ENCODE measurements at regions of chr3 and their contacts with region 1.

Region 1: DNA sequence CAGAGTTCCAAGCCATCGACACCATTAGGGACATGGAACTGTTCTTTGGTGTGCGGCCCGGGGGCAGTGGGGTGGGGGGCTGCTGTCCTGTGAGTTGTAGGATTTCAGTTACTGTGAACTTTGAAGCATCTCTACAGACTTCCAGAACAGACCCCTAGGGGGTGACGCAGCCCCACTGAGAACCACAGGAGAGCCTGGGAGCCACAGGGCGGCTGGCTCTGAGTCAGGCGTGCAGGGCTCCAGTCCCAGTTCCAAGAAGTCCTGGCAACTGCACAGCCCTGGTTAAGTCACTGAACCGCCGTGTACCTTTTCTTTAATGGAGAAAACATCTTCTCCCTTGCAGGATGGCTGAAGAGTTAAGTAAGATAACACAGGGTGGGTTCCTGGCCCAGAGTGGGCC is 23.5 kb upstream of the LRTM1 start:
- DNase-seq: peak in 1 of 2 experiments; percentile 42
- H3K4me3 ChIP-seq: no peak overlapping the region
- H3K27ac ChIP-seq: no peak overlapping the region
- H3K4me1 ChIP-seq: peaks cover 17% of the 10 kb centered on the region
- H3K27me3 ChIP-seq: no peaks in the 10 kb centered on the region
- CTCF ChIP-seq: 0 out of 2 replicates have a peak, but pooled peaks have one; percentile 33

Region 2: DNA sequence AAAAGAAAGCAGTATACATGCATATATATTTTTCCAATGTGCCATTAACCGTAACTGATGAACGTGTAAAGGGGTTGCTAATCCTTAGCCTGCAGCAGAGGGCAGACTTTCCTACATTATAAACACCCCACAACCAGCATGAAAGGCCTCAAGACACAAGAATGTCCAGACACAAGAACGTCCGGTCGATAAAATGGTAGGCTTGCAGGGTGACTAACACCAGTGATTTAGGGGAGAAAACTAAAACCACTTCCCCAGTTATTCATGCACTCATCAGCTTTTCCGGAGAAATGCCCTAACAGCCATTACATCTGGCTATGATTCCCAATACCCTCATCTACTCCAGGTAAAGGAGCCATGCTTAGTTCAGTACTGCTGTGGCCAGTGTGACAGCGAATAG is 81.0 kb before region 1 on chr3:
- CTCF ChIA-PET with region 1: interaction called, 3 read pairs
- POLR2A ChIA-PET with region 1: no interaction called
- intact Hi-C with region 1: loop called (anchors 5 kb)
- DNase-seq: peak; percentile 48 to 72
- H3K4me3 ChIP-seq: no peak overlapping the region
- H3K27ac ChIP-seq: no peak overlapping the region; the same call in 1 of the 2 replicates
- H3K4me1 ChIP-seq: peaks cover 17% of the 10 kb centered on the region
- H3K27me3 ChIP-seq: no peaks in the 10 kb centered on the region
- CTCF ChIP-seq: peak; percentile 68

Region 3: GRCh38 chr3:54891548-54892120 is 59.8 kb before region 1 on chr3:
- CTCF ChIA-PET with region 1: interaction called, 4 read pairs
- POLR2A ChIA-PET with region 1: no interaction called
- intact Hi-C with region 1: loop called (anchors 1 kb)
- DNase-seq: peak; percentile 91 to 97
- H3K4me3 ChIP-seq: no peak overlapping the region; the same call in 1 of the 2 replicates
- H3K27ac ChIP-seq: peak overlapping the region; percentile 69
- H3K4me1 ChIP-seq: peaks cover 25% of the 10 kb centered on the region
- H3K27me3 ChIP-seq: no peaks in the 10 kb centered on the region
- CTCF ChIP-seq: peak; percentile 48

Region 4: GRCh38 chr3:54999159-54999558 is 47.8 kb after region 1 on chr3:
- CTCF ChIA-PET with region 1: no interaction called
- POLR2A ChIA-PET with region 1: no interaction called
- intact Hi-C with region 1: loop called (anchors 5 kb)
- DNase-seq: peak; percentile 33 to 71
- H3K4me3 ChIP-seq: no peak overlapping the region
- H3K27ac ChIP-seq: no peak overlapping the region
- H3K4me1 ChIP-seq: peaks cover 4% of the 10 kb centered on the region; the same call in 1 of the 2 replicates
- H3K27me3 ChIP-seq: no peaks in the 10 kb centered on the region
- CTCF ChIP-seq: peak; percentile 48; the same call in 1 of the 2 replicates

Region 5: GRCh38 chr3:55160241-55160983 is 209.0 kb after region 1 on chr3:
- CTCF ChIA-PET with region 1: no interaction called
- POLR2A ChIA-PET with region 1: no interaction called
- intact Hi-C with region 1: loop called (anchors 5 kb)
- DNase-seq: peak; percentile 81 to 87
- H3K4me3 ChIP-seq: 0 out of 2 replicates have a peak overlapping the region, but pooled peaks have one; percentile 7
- H3K27ac ChIP-seq: peak overlapping the region; percentile 57
- H3K4me1 ChIP-seq: peaks cover 15% of the 10 kb centered on the region
- H3K27me3 ChIP-seq: no peaks in the 10 kb centered on the region
- CTCF ChIP-seq: no peak

Measured in PC-9 (cell line).